ENCODE measurements at regions of chr3 and their contacts with region 1.

Region 1: GRCh38 chr3:22358334-22358733 is 607.3 kb upstream of the ZNF385D start:
- DNase-seq: no peak

Region 2: GRCh38 chr3:22141769-22142168 is 216.6 kb before region 1 on chr3:
- intact Hi-C with region 1: no loop called
- DNase-seq: no peak

Region 3: GRCh38 chr3:22161315-22161714 is 197.0 kb before region 1 on chr3:
- intact Hi-C with region 1: no loop called
- DNase-seq: no peak

Region 4: DNA sequence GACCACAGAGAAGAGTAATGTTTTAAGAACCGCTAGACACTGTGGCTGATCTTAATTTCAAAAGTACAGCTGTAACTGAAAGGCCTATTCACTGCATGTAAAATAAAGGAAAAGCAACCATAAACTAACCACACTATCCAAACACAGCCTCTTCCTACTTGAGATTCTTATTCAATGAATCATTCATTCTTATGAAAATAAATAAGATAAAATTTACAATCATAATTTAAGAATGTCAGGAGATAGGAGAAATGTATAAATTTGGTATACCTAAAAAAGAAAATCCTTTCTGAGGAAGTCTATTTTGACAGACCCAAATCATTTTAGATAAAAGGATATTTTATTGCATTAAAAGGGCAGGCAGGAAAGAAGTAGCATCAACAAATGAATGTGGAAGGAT is 73.8 kb before region 1 on chr3:
- intact Hi-C with region 1: no loop called
- DNase-seq: no peak

Region 5: GRCh38 chr3:22319446-22319845 is 38.9 kb before region 1 on chr3:
- intact Hi-C with region 1: no loop called
- DNase-seq: no peak

Region 6: DNA sequence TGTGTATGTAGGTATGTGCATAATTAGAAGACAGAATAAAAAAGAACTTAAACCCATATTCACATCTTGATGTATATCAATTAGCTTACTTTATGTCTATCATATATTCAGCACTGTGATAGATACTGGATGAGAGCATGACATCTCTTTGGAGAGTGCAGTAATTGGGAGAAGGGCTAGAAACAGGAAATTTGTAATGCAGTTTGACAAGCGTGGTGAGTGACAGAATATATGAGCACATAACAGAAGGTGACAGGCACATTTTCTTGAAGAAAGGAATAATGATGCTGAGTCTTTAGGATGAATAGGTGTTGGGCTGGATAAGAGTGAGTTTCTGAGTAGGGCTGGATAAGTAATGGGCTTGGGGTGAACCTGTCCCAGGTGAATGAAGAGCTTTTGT is 73.0 kb after region 1 on chr3:
- intact Hi-C with region 1: loop called (anchors 1 kb)
- DNase-seq: no peak